ENCODE measurements at regions of chr18 and their contacts with region 1.

Region 1: DNA sequence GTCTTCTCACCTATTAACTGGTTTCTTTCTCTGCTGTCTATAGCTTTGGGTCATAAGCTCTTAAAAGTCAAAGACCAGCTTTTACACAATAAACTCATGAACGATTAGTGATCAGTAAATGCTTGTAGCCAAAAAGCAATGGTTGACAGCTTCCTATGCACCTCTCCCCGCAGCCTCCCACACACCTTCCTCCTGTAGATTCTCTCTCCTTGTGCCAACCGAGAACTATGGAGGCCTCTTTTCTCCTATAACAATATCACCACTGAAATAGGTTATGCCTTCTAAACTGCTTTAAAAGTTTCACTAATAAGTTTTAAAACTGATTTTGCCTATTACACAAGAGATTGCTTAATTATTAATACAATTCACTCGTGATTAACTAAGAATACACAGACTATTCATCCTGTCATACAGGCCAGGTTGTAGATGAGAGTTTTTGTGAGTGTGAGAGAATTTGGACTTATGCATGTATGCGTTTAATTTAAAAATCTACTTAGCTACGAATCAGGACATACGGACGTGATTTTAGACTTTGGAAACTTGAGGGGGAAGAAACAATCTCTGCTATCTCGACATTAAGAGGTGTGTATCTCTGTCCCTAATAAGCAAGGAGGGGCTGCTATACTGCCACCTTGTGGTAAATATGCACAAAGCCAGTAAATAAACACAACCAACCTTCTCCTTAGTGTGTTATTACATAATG is 229.1 kb upstream of the RBBP8 start:
- DNase-seq: no peak
- ATAC-seq: no peak
- H3K4me3 ChIP-seq: no peak overlapping the region
- H3K27ac ChIP-seq: no peak overlapping the region
- H3K4me1 ChIP-seq: no peaks in the 10 kb centered on the region
- H3K27me3 ChIP-seq: no peaks in the 10 kb centered on the region
- CTCF ChIP-seq: peak; percentile 75; the same call in 1 of the 2 replicates

Region 2: DNA sequence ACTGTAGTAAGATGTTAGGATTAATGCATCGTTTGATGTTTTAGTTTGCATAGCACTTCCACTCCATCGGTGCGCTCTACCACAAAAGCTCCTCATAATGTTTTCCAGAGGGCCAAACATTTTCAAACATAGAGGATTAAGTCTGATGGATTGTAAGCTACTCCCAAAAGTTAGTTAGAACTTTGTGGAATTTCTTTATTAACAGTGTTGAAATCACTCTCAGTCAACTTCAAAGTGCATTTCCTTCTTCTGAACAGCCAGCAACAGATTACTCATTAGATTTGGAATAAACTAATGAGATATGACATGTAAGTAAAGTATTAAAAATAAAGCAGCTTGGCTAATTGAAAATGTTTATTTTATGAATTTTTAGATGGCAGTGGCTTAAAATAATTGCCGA is 256.2 kb before region 1 on chr18:
- CTCF ChIA-PET with region 1: no interaction called
- POLR2A ChIA-PET with region 1: no interaction called
- in situ Hi-C with region 1: no loop called
- intact Hi-C with region 1: loop called (anchors 5 kb)
- DNase-seq: no peak
- ATAC-seq: no peak
- H3K4me3 ChIP-seq: no peak overlapping the region
- H3K27ac ChIP-seq: no peak overlapping the region
- H3K4me1 ChIP-seq: no peaks in the 10 kb centered on the region; the same call in 1 of the 2 replicates
- H3K27me3 ChIP-seq: no peaks in the 10 kb centered on the region
- CTCF ChIP-seq: no peak

Region 3: DNA sequence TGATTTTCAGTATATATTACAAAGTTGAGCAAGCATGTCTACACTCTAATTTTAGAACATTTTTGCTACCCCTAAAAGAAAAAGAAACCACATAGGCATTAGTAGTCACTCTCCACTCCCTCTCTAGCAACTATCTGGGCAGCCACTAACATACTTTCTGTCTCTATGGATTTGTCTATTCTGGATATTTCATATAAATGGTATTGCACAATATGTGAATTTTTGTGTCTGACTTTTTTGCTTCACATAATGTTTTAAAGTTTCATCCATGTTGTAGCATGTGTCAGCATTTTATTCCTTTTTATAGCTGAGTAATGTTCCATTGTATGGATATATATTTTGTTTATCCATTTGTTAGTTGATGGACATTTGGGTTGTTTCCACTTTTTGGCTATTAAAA is 53.8 kb before region 1 on chr18:
- CTCF ChIA-PET with region 1: no interaction called
- POLR2A ChIA-PET with region 1: no interaction called
- in situ Hi-C with region 1: no loop called
- intact Hi-C with region 1: loop called (anchors 10 kb)
- DNase-seq: no peak
- ATAC-seq: no peak
- H3K4me3 ChIP-seq: no peak overlapping the region
- H3K27ac ChIP-seq: no peak overlapping the region
- H3K4me1 ChIP-seq: no peaks in the 10 kb centered on the region
- H3K27me3 ChIP-seq: no peaks in the 10 kb centered on the region
- CTCF ChIP-seq: no peak

Measured in Panc1 (cell line).